Left ventricle myocardium inferior (tissue), 1 donor: ENCODE measurements at regions of chr17 and their contacts with region 1.

Region 1: GRCh38 chr17:12584727-12585126 is 81.0 kb upstream of the MYOCD start:
- DNase-seq: no peak
- H3K4me3 ChIP-seq: peak overlapping the region; percentile 48
- H3K27ac ChIP-seq: peak overlapping the region; percentile 62
- H3K4me1 ChIP-seq: peaks cover 23% of the 10 kb centered on the region
- H3K27me3 ChIP-seq: no peaks in the 10 kb centered on the region
- CTCF ChIP-seq: no peak

Region 2: DNA sequence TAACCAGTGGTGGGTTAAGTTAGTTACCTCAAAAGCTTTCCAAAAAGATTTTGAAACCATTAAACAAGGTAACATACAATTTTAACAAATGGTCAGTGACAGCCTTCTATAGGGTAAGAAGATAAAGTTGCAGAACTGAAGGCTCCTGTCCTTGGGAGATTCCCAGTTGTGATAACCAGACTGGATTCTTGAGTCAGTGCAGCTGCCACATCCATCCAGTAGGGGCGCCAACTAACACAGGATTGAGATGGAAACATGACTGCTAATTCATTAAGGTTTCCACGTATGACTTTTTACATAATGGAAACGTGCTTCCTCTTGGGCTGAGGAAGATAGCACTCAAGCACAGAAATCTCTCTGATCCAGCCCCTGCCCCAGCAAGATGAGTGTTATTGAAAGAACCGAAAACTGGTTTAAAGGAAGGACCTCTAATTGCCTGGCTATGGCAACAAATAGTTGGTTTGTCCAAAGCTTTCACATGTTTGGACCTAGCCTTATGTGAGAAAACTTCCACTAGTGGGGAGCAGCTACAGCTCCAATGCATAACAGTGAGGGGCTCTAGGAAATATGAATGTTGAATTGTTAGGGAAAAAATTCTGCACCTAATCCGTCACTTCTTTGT is 188.9 kb before region 1 on chr17:
- intact Hi-C with region 1: no loop called
- DNase-seq: no peak
- H3K4me3 ChIP-seq: no peak overlapping the region
- H3K27ac ChIP-seq: no peak overlapping the region
- H3K4me1 ChIP-seq: no peaks in the 10 kb centered on the region
- H3K27me3 ChIP-seq: no peaks in the 10 kb centered on the region
- CTCF ChIP-seq: peak; percentile 55

Region 3: DNA sequence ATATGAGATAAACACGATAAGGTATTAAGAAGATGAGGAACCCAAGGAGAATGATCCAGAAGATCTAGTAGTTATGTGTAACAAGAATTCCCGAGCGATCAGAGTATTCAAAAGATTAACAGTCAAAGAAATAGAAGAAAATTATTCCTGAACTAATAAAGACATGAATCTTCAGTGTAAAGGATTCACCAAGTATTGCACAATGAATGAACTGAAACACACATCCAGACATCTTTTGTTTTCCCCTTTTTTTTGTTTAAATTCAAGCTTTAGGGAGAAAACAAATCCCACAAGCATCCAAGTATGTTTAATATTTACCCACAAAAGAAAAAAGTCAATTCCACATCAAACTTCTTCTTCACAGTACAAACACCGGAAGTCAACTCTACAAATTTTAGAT is 57.3 kb after region 1 on chr17:
- intact Hi-C with region 1: loop called (anchors 2 kb)
- DNase-seq: no peak
- H3K4me3 ChIP-seq: no peak overlapping the region
- H3K27ac ChIP-seq: no peak overlapping the region
- H3K4me1 ChIP-seq: peaks cover 10% of the 10 kb centered on the region
- H3K27me3 ChIP-seq: no peaks in the 10 kb centered on the region
- CTCF ChIP-seq: no peak